ENCODE measurements at regions of chr5 and their contacts with region 1.

Region 1: GRCh38 chr5:132495667-132496190 is 5.2 kb upstream of the IRF1 start:
- DNase-seq: no peak
- ATAC-seq: peak; percentile 61
- H3K4me3 ChIP-seq: peak overlapping the region; percentile 73 to 85
- H3K27ac ChIP-seq: peak overlapping the region; percentile 90
- H3K4me1 ChIP-seq: peaks cover 30 to 71% of the 10 kb centered on the region in 2 experiments
- H3K27me3 ChIP-seq: no peaks in the 10 kb centered on the region
- CTCF ChIP-seq: no peak
- POLR2A ChIP-seq: no peak
- RAD21 ChIP-seq: no peak

Region 2: GRCh38 chr5:132419502-132420468 is 75.9 kb before region 1 on chr5:
- CTCF ChIA-PET with region 1: interaction called, 8 read pairs
- POLR2A ChIA-PET with region 1: interaction called, 11 read pairs
- RAD21 ChIA-PET with region 1: interaction called, 3 to 4 read pairs
- intact Hi-C with region 1: loop called (anchors 2 kb)
- DNase-seq: peak; percentile 56
- ATAC-seq: peak; percentile 86
- H3K4me3 ChIP-seq: no peak overlapping the region
- H3K27ac ChIP-seq: no peak overlapping the region
- H3K4me1 ChIP-seq: peaks cover 31 to 87% of the 10 kb centered on the region in 2 experiments
- H3K27me3 ChIP-seq: no peaks in the 10 kb centered on the region
- CTCF ChIP-seq: peak in 2 of 3 experiments; percentile 80 to 90; a peak in 4 of 6 replicates
- POLR2A ChIP-seq: no peak
- RAD21 ChIP-seq: no peak

Region 3: DNA sequence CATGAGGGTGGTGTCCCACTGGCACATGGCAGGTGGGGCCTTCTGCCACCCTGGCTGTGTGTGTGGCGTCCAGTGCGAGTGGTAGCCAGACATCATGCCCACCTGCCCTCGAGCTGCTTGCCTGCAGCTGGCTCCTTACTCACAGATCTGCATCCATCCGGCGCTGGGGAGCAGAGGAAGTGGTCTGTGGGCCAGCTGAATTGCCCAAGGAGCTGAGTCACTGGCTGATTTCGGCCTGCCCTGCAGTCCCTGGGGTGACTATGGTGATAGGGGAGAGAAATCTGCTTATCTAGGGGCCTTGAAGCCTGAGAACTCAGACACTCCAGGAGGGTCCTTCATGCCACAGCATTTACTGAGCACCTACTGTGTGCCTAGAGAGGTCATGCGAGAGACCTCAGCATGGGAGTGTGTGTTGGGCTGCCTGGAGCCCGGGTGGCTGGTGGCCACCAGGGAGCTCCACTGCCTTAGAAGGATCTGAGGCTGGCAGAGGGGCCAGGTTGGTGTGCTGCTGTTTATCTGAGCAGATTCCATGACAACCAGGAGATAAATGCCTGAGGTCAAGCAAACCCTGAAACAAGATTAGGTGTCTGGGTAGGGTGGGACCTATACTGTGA is 69.1 kb before region 1 on chr5:
- CTCF ChIA-PET with region 1: interaction called, 6 read pairs
- POLR2A ChIA-PET with region 1: interaction called, 19 read pairs
- RAD21 ChIA-PET with region 1: interaction called, 4 to 8 read pairs
- intact Hi-C with region 1: loop called (anchors 1 kb)
- DNase-seq: no peak
- ATAC-seq: peak; percentile 75
- H3K4me3 ChIP-seq: no peak overlapping the region
- H3K27ac ChIP-seq: peak overlapping the region; percentile 44; the same call in 1 of the 2 replicates
- H3K4me1 ChIP-seq: peaks cover 61 to 83% of the 10 kb centered on the region in 2 experiments
- H3K27me3 ChIP-seq: no peaks in the 10 kb centered on the region
- CTCF ChIP-seq: peak in 2 of 3 experiments; percentile 69 to 70; a peak in 4 of 6 replicates
- POLR2A ChIP-seq: no peak
- RAD21 ChIP-seq: no peak

Region 4: GRCh38 chr5:132506094-132506692 is 10.5 kb after region 1 on chr5:
- CTCF ChIA-PET with region 1: interaction called, 18 read pairs
- POLR2A ChIA-PET with region 1: interaction called, 10 read pairs
- RAD21 ChIA-PET with region 1: no interaction called
- intact Hi-C with region 1: no loop called
- DNase-seq: peak; percentile 35
- ATAC-seq: peak; percentile 85
- H3K4me3 ChIP-seq: no peak overlapping the region
- H3K27ac ChIP-seq: no peak overlapping the region
- H3K4me1 ChIP-seq: peaks cover 8 to 32% of the 10 kb centered on the region in 2 experiments
- H3K27me3 ChIP-seq: no peaks in the 10 kb centered on the region
- CTCF ChIP-seq: peak in 2 of 3 experiments; percentile 69 to 70; a peak in 4 of 6 replicates
- POLR2A ChIP-seq: no peak
- RAD21 ChIP-seq: no peak

Region 5: GRCh38 chr5:132662925-132663770 is 167.4 kb after region 1 on chr5:
- CTCF ChIA-PET with region 1: no interaction called
- POLR2A ChIA-PET with region 1: no interaction called
- RAD21 ChIA-PET with region 1: no interaction called
- intact Hi-C with region 1: no loop called
- DNase-seq: no peak
- ATAC-seq: peak; percentile 35
- H3K4me3 ChIP-seq: no peak overlapping the region
- H3K27ac ChIP-seq: no peak overlapping the region
- H3K4me1 ChIP-seq: peaks cover 0 to 13% of the 10 kb centered on the region in 2 experiments; a peak in 1 of 4 replicates
- H3K27me3 ChIP-seq: no peaks in the 10 kb centered on the region
- CTCF ChIP-seq: no peak
- POLR2A ChIP-seq: no peak
- RAD21 ChIP-seq: no peak

Measured in HCT116 (cell line).